Endothelial cell of umbilical vein (primary cell): ENCODE measurements at regions of chr12 and their contacts with region 1.

Region 1: DNA sequence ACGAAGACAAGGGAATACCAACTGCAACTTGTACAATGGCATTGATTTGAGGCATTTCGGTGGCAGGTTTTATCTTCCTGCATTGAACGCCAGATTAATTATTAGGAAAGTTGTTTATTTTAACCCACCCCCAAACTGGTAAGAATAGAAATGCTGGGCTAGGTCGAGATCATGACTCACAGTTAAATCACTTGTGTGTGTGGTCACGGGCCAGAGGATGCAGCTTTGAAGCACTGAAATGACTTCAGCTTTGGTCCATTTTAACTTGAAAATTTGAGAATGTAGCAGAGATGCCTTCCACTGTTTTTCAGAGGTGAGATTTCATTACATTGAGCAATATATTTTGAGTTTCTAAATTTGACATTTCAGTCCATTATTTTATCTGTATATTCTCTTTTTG is 23.6 kb upstream of the KCNH3 start:
- DNase-seq: peak; percentile 83
- H3K4me3 ChIP-seq: no peak overlapping the region
- H3K27ac ChIP-seq: peak overlapping the region; percentile 62
- H3K4me1 ChIP-seq: peaks cover 38% of the 10 kb centered on the region
- H3K27me3 ChIP-seq: no peaks in the 10 kb centered on the region
- CTCF ChIP-seq: no peak
- POLR2A ChIP-seq: no peak

Region 2: DNA sequence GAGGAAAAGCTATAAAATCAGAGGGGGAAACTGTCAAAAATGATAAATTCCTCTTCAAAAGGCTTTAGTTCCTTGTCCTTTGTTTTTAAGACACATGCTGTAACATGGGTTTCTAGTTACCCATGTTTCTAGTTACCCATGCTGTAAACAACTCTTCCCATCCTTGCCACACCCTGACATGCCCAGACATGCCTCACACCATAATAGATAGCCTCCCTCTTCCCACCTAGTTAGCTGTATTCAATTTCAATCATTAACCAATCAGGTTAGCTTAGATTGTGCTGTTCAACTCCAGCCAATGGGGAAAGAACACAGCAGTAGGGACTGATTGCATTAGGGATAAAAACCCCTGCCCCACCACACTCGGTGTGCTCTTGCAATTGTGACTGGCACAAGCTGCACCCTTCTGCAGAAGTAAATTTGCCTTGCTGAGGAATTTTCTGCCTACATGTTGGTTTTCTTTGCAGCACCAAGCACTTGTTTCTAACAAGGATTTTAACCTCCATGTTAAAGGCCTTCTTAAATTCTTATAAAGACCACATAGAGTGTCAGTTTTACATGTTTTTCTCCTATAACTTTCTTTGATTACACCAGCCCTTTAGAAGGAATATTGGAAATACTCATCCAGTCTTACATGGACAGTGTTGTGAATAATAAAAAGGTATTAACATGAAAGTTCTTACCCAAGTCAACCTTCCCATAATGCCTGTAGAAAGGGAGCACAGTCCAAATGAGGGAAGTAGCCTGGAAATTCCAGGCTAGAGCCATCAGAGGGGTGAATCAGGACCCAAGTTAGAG is 912.9 kb before region 1 on chr12:
- CTCF ChIA-PET with region 1: no interaction called
- POLR2A ChIA-PET with region 1: no interaction called
- dilution Hi-C with region 1: no loop called
- intact Hi-C with region 1: no loop called
- DNase-seq: no peak
- H3K4me3 ChIP-seq: no peak overlapping the region
- H3K27ac ChIP-seq: no peak overlapping the region
- H3K4me1 ChIP-seq: no peaks in the 10 kb centered on the region
- H3K27me3 ChIP-seq: peaks cover 0 to 5% of the 10 kb centered on the region in 2 experiments
- CTCF ChIP-seq: no peak
- POLR2A ChIP-seq: no peak

Region 3: GRCh38 chr12:49331380-49332222 is 183.7 kb before region 1 on chr12:
- CTCF ChIA-PET with region 1: interaction called, 66 read pairs
- POLR2A ChIA-PET with region 1: no interaction called
- dilution Hi-C with region 1: no loop called
- intact Hi-C with region 1: no loop called
- DNase-seq: peak; percentile 75
- H3K4me3 ChIP-seq: no peak overlapping the region
- H3K27ac ChIP-seq: no peak overlapping the region
- H3K4me1 ChIP-seq: no peaks in the 10 kb centered on the region
- H3K27me3 ChIP-seq: peaks cover 33% of the 10 kb centered on the region in 2 experiments
- CTCF ChIP-seq: peak; percentile 81 to 86
- POLR2A ChIP-seq: no peak

Region 4: DNA sequence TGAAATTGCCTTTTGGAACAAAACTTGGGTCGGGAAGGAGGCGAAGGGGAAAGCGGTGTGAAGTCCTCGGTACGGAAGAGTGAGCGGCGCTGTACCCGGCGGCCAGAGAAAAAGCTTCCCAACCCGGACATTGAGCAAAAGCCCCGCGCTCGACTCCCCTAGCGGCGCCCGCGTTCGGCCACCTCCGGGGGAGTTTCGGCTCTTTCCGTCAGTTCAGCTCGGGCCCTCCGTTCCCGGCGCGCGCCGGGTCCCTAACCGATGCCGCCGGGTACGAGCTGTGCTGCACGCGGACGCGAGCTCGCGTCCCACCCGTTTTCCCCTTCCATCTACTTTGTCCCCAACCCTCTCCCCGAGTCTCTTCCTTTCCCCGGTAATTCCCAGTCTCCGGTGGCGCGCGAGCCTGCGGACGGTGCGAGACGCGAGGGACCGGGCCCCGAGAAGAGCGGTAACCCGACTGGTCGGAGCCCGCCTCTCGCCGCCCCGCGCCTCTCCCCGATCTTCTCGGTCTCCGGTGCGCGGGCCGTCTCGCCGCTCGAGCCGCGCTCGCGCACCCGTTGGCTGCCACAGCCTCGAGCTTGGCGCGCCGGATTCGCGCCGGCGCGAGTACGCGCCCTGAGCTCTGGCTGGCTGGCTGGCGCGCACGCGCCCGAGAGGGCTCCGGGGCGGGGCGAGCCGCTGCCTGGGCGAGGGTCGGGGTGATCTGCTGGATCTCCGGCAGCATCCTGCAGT is 148.4 kb before region 1 on chr12:
- CTCF ChIA-PET with region 1: interaction called, 679 read pairs
- POLR2A ChIA-PET with region 1: interaction called, 10 read pairs
- dilution Hi-C with region 1: loop called (anchors 25 kb)
- intact Hi-C with region 1: loop called (anchors 1 kb)
- DNase-seq: peak; percentile 97
- H3K4me3 ChIP-seq: peak overlapping the region; percentile 76 to 94 (median 85)
- H3K27ac ChIP-seq: peak overlapping the region; percentile 77
- H3K4me1 ChIP-seq: peaks cover 35% of the 10 kb centered on the region
- H3K27me3 ChIP-seq: no peaks in the 10 kb centered on the region
- CTCF ChIP-seq: peak in 1 of 2 donors; percentile 44
- POLR2A ChIP-seq: peak; percentile 46

Region 5: DNA sequence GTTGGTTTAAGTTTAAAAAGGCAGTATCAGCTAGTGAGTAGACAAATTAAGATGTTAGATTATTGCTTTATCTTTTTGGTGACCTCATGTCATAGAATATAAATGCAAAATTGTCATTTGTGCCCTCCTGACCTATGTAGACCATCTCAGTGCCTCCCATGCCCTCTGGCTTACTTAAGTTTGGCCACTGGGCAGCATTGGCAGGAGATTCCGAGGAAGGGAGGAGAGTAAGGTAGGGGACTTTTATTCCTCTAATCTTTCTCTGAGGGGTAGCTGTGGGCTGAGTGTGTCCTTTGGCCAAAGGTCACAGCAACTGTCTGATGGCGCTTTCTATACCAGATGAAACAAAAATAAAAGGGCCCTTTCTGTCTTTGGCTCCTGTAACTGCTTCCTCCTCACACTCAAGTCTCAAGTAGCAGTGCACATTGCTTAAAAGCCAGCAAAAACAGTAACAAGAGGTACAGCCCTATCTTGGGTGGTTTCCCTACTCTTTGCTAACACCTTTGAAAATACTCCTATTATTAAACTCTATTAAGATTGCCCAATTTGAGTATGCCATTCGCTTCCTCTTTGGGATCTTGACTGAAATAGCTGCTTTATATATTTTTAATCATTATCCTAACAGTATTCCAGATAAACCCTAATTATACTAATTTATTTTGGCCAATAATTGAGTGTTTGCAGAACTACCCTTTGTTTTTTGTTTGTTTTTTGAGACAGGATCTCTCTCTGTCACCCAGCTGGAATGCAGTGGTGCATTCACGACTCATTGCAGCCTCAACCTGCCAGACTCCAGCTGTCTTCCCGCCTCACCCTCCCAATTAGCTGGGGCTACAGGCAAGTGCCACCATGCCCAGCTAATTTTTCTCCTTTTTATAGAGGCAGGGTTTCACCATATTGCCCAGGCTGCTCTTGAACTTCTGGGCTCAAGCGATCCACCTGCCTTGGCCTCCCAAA is 32.9 kb before region 1 on chr12:
- CTCF ChIA-PET with region 1: interaction called, 22 read pairs
- POLR2A ChIA-PET with region 1: no interaction called
- dilution Hi-C with region 1: no loop called
- intact Hi-C with region 1: no loop called
- DNase-seq: no peak
- H3K4me3 ChIP-seq: no peak overlapping the region
- H3K27ac ChIP-seq: peak overlapping the region; percentile 62
- H3K4me1 ChIP-seq: peaks cover 24% of the 10 kb centered on the region
- H3K27me3 ChIP-seq: no peaks in the 10 kb centered on the region
- CTCF ChIP-seq: no peak
- POLR2A ChIP-seq: no peak

Region 6: GRCh38 chr12:49503674-49504180 is 11.5 kb before region 1 on chr12:
- CTCF ChIA-PET with region 1: interaction called, 33 read pairs
- POLR2A ChIA-PET with region 1: interaction called, 3 read pairs
- dilution Hi-C with region 1: no loop called
- intact Hi-C with region 1: no loop called
- DNase-seq: peak; percentile 94
- H3K4me3 ChIP-seq: peak overlapping the region in 1 of 3 experiments; percentile 21
- H3K27ac ChIP-seq: peak overlapping the region; percentile 86
- H3K4me1 ChIP-seq: peaks cover 68% of the 10 kb centered on the region
- H3K27me3 ChIP-seq: no peaks in the 10 kb centered on the region
- CTCF ChIP-seq: no peak
- POLR2A ChIP-seq: no peak

Region 7: DNA sequence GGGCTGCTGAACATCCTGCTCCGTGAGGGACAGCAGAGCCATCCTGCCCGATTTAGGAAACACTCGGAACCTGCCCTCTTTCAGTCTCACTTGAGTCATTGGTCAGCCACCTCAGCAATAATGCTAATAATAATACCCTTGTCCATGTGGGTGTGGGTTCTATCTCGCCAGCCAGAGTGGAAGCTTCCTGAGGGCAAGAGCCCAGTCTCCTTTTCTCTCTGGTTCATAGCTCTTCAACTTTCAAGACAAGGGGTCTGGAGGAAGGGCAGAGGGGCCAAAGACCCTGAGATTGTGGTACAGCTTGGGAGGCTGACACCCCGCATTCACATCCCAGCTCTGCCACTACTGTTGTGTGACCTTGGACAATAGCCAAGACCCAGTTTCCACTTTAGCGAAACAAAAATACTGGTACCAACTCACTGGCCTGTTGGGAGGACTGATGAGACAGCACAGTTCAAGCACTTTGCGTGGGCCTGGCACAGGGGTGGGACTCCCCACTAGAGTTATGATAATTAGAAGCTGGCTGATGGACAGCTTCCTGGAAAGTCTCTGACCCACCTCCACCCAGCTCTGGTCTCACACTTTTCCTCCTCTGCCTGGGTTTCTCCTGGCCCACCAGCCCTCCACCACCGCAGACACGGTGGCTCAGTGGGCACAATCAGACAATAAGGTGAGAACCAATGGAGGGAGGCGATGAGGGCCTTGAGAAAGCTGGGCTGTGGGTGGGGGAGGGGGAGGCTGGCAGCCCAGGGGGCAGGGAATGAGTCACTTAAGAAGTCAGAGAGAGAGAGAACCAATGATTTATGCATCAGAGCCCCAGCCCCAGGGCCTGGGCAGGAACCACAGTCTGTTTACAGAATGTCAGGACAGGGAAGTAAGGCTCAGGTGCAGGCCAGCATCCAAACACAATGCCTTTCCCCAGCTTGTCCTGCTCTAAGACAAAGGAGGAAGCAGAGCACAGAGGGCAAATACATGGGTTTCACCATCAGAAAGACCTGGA is 378.8 kb after region 1 on chr12:
- CTCF ChIA-PET with region 1: no interaction called
- POLR2A ChIA-PET with region 1: no interaction called
- dilution Hi-C with region 1: no loop called
- intact Hi-C with region 1: no loop called
- DNase-seq: peak; percentile 62
- H3K4me3 ChIP-seq: no peak overlapping the region
- H3K27ac ChIP-seq: no peak overlapping the region
- H3K4me1 ChIP-seq: peaks cover 6% of the 10 kb centered on the region
- H3K27me3 ChIP-seq: peaks cover 0 to 9% of the 10 kb centered on the region in 2 experiments
- CTCF ChIP-seq: no peak
- POLR2A ChIP-seq: no peak